ENCODE measurements at regions of chr14 and their contacts with region 1.

Region 1: GRCh38 chr14:68222726-68223125 is 403.1 kb downstream of the RAD51B start:
- DNase-seq: no peak
- ATAC-seq: no peak
- H3K4me3 ChIP-seq: no peak overlapping the region
- H3K27ac ChIP-seq: no peak overlapping the region
- H3K4me1 ChIP-seq: no peaks in the 10 kb centered on the region
- H3K27me3 ChIP-seq: no peaks in the 10 kb centered on the region
- CTCF ChIP-seq: no peak
- EP300 ChIP-seq: no peak
- POLR2A ChIP-seq: no peak
- RAD21 ChIP-seq: no peak

Region 2: GRCh38 chr14:68255697-68256203 is 33.0 kb after region 1 on chr14:
- CTCF ChIA-PET with region 1: no interaction called
- POLR2A ChIA-PET with region 1: no interaction called
- in situ Hi-C with region 1: no loop called
- intact Hi-C with region 1: loop called (anchors 1 kb)
- DNase-seq: no peak
- ATAC-seq: no peak
- H3K4me3 ChIP-seq: no peak overlapping the region
- H3K27ac ChIP-seq: no peak overlapping the region
- H3K4me1 ChIP-seq: peaks cover 42% of the 10 kb centered on the region
- H3K27me3 ChIP-seq: no peaks in the 10 kb centered on the region
- CTCF ChIP-seq: no peak
- EP300 ChIP-seq: no peak
- POLR2A ChIP-seq: no peak
- RAD21 ChIP-seq: no peak

Measured in HepG2 (cell line).